Motor neuron (in vitro differentiated cells): ENCODE measurements at regions of chr17 and their contacts with region 1.

Region 1: GRCh38 chr17:77254951-77255825 is 114.4 kb downstream of the SEC14L1 start:
- ATAC-seq: peak; percentile 40 to 92 (median 89)
- H3K4me3 ChIP-seq: no peak overlapping the region
- H3K27ac ChIP-seq: no peak overlapping the region
- H3K4me1 ChIP-seq: peaks cover 7 to 8% of the 10 kb centered on the region in 2 donors

Region 2: DNA sequence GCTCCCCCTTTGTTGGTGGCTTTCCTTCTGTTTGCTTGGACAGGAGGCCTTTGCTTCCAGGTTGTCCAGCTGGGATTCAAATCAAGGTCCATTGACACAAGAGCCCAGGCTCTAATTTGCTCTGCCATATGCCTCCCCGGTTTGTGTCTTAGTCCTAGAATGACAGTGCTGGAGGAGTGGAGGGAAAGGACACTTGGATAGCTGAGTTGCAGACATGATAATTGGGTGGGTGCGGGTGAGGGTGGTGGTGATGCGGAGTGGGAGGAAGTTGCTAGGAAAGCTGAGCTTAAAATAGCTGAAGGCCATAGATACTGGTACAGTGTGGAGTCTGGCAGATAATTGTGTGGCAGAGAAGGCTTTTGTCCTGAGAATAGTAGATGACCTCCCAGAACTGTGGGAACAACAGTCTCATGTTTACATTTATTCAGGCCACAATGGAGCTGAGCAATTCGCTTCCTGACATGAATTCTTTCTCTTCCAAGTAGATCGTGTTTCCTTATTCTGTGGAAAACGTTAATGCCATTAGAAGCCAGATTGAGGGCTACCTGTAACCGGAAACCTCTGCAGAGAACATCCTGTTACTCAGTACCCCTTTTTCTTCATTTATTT is 90.6 kb before region 1 on chr17:
- in situ Hi-C with region 1: loop called in 1 of 9 experiments (anchors 25 kb)
- ATAC-seq: peak; percentile 23 to 93 (median 86)
- H3K4me3 ChIP-seq: no peak overlapping the region
- H3K27ac ChIP-seq: peak overlapping the region; percentile 27 to 43
- H3K4me1 ChIP-seq: peaks cover 53% of the 10 kb centered on the region in 2 donors

Region 3: GRCh38 chr17:77451245-77451893 is 196.2 kb after region 1 on chr17:
- in situ Hi-C with region 1: no loop called
- ATAC-seq: peak; percentile 43 to 81 (median 68)
- H3K4me3 ChIP-seq: peak overlapping the region; percentile 40 to 65 (median 55)
- H3K27ac ChIP-seq: peak overlapping the region; percentile 96 to 98
- H3K4me1 ChIP-seq: peaks cover 53 to 58% of the 10 kb centered on the region in 2 donors